OCI-LY7 (cell line): ENCODE measurements at regions of chr10 and their contacts with region 1.

Region 1: DNA sequence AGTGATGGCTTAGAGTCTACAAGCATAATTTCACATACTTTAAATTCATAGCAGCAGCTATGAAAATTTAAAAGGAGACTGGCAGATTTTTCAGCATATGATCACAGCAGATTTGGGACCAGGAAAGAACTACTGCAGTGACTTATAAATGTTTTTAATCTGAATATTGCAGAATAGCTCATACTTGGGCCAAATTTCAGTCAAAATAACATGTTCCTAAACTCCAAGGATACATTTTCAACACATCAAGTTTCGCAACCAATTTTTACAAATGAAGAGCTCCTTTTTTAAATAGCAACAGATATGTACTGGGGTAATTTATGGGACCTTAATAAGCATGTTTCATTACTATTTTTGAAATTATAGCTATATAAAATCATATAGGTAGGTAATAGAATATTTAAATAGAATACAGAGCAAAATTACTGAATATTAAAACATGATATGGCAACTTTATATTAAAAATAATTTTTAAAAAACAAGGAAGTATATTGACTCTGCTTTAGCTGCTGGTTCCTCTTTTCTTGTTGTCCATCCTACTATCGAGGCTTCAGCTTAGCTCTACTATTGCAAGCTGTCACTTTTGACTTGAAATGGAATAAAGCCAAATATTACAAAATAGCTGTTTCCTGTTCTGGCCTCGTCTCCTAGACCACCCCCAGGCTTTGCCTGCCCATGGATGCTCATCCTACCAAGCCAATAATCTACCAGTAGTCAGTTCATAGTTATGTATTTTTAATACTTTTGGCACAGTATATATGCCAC is 123.1 kb downstream of the NRBF2 start:
- DNase-seq: peak; percentile 60
- H3K4me3 ChIP-seq: peak overlapping the region; percentile 32
- H3K27ac ChIP-seq: peak overlapping the region; percentile 36
- H3K4me1 ChIP-seq: peaks cover 73% of the 10 kb centered on the region
- CTCF ChIP-seq: no peak

Region 2: GRCh38 chr10:63236113-63236935 is 19.9 kb before region 1 on chr10:
- CTCF ChIA-PET with region 1: no interaction called
- POLR2A ChIA-PET with region 1: interaction called, 53 read pairs
- intact Hi-C with region 1: no loop called
- DNase-seq: peak; percentile 47
- H3K4me3 ChIP-seq: no peak overlapping the region
- H3K27ac ChIP-seq: peak overlapping the region; percentile 55
- H3K4me1 ChIP-seq: peaks cover 58% of the 10 kb centered on the region
- CTCF ChIP-seq: no peak

Region 3: DNA sequence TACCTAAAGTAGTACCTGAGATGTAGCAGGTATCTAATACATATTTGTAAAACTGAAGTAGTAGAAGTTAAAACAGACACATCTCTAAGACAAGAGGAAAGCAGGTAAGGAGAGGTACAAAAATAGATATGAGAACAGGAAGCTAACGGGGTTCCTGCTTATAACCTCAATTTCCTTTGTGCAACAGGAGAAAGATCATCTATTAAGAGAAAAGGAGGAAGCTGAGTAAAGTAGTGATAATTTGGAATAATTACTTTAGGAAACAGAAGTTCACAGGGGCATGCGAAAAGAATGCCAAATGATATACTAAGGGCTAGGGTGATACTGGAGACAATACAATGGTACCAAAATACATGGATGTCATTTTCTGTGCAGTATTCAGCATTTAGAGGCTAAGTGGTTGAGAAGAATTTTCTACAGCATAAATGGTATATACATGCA is 14.3 kb before region 1 on chr10:
- CTCF ChIA-PET with region 1: interaction called, 3 read pairs
- POLR2A ChIA-PET with region 1: interaction called, 53 read pairs
- intact Hi-C with region 1: loop called (anchors 2 kb)
- DNase-seq: no peak
- H3K4me3 ChIP-seq: peak overlapping the region; percentile 36
- H3K27ac ChIP-seq: peak overlapping the region; percentile 46
- H3K4me1 ChIP-seq: peaks cover 75% of the 10 kb centered on the region
- CTCF ChIP-seq: no peak